Adrenal gland (tissue), 19 donors: ENCODE measurements at regions of chr17 and their contacts with region 1.

Region 1: GRCh38 chr17:17506811-17507464 is 10.7 kb upstream of the RASD1 start:
- DNase-seq: peak in 1 of 7 donors; percentile 76
- H3K4me3 ChIP-seq: no peak overlapping the region
- H3K27ac ChIP-seq: no peak overlapping the region
- H3K4me1 ChIP-seq: no peaks in the 10 kb centered on the region
- H3K27me3 ChIP-seq: no peaks in the 10 kb centered on the region
- CTCF ChIP-seq: no peak
- POLR2A ChIP-seq: no peak

Region 2: DNA sequence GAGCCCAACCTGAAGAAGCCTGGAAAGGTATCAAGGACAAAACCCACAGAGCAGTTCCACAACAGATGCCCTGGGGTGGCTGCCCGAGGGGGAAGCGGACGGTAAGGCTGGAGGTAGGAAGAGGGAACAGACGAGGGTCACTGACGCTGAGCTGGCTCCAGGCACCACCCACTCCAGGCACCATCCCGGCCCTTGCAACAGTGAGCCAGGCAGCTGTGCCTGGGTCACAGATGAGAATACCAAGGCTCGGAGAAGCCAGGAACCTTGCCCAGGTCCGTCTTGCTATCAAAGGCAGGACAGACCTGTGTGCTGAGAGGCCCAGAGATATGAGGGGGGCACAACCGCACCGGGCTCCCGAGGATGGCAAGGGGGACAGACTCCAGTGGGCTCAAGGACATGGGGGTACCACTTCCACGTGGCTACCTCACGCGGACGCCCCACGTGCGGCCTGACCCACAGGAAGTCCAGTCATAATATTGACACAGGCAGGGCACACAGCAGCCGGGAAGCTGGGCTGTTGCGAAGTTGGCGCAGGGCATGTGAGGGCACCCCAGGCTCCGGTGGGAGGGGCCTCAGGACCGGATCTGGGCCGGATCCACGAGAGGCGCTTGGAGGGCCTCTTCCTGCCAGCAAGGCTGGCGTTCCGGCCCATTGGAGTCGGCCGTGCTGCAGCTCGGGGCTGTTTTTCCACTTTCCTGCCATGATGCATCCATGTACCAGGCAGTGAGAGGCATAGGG is 54.6 kb after region 1 on chr17:
- intact Hi-C with region 1: loop called (anchors 5 kb)
- DNase-seq: peak in 4 of 7 donors; percentile 33 to 57 (median 46)
- H3K4me3 ChIP-seq: no peak overlapping the region
- H3K27ac ChIP-seq: peak overlapping the region in 1 of 5 donors; percentile 58
- H3K4me1 ChIP-seq: peaks cover 0 to 5% of the 10 kb centered on the region in 2 donors
- H3K27me3 ChIP-seq: no peaks in the 10 kb centered on the region
- CTCF ChIP-seq: no peak
- POLR2A ChIP-seq: no peak